K562 (cell line): ENCODE measurements at regions of chr16 and their contacts with region 1.

Region 1: GRCh38 chr16:68528686-68529379 is 10.3 kb upstream of the ZFP90 start:
- DNase-seq: peak; percentile 81 to 87 (median 81)
- ATAC-seq: peak; percentile 96
- H3K4me3 ChIP-seq: no peak overlapping the region
- H3K27ac ChIP-seq: no peak overlapping the region
- H3K4me1 ChIP-seq: peaks cover 0 to 17% of the 10 kb centered on the region in 2 experiments; a peak in 2 of 5 replicates
- H3K27me3 ChIP-seq: peaks cover 0 to 4% of the 10 kb centered on the region in 2 experiments; a peak in 1 of 5 replicates
- CTCF ChIP-seq: peak; percentile 92 to 99 (median 99)
- EP300 ChIP-seq: no peak
- POLR2A ChIP-seq: no peak
- RAD21 ChIP-seq: peak; percentile 89 to 94

Region 2: GRCh38 chr16:68575082-68575481 is 46.2 kb after region 1 on chr16:
- CTCF ChIA-PET with region 1: no interaction called
- POLR2A ChIA-PET with region 1: no interaction called
- in situ Hi-C with region 1: no loop called
- intact Hi-C with region 1: no loop called
- DNase-seq: no peak
- ATAC-seq: no peak
- H3K4me3 ChIP-seq: no peak overlapping the region
- H3K27ac ChIP-seq: no peak overlapping the region
- H3K4me1 ChIP-seq: no peaks in the 10 kb centered on the region
- H3K27me3 ChIP-seq: no peaks in the 10 kb centered on the region
- CTCF ChIP-seq: no peak
- EP300 ChIP-seq: no peak
- POLR2A ChIP-seq: no peak
- RAD21 ChIP-seq: no peak

Region 3: GRCh38 chr16:68689925-68690324 is 161.1 kb after region 1 on chr16:
- CTCF ChIA-PET with region 1: no interaction called
- POLR2A ChIA-PET with region 1: no interaction called
- in situ Hi-C with region 1: no loop called
- intact Hi-C with region 1: loop called (anchors 5 kb)
- DNase-seq: no peak
- ATAC-seq: no peak
- H3K4me3 ChIP-seq: no peak overlapping the region
- H3K27ac ChIP-seq: no peak overlapping the region
- H3K4me1 ChIP-seq: peaks cover 0 to 4% of the 10 kb centered on the region in 2 experiments; a peak in 2 of 5 replicates
- H3K27me3 ChIP-seq: peaks cover 20 to 45% of the 10 kb centered on the region in 2 experiments; a peak in 4 of 5 replicates
- CTCF ChIP-seq: no peak
- EP300 ChIP-seq: no peak
- POLR2A ChIP-seq: no peak
- RAD21 ChIP-seq: no peak

Region 4: DNA sequence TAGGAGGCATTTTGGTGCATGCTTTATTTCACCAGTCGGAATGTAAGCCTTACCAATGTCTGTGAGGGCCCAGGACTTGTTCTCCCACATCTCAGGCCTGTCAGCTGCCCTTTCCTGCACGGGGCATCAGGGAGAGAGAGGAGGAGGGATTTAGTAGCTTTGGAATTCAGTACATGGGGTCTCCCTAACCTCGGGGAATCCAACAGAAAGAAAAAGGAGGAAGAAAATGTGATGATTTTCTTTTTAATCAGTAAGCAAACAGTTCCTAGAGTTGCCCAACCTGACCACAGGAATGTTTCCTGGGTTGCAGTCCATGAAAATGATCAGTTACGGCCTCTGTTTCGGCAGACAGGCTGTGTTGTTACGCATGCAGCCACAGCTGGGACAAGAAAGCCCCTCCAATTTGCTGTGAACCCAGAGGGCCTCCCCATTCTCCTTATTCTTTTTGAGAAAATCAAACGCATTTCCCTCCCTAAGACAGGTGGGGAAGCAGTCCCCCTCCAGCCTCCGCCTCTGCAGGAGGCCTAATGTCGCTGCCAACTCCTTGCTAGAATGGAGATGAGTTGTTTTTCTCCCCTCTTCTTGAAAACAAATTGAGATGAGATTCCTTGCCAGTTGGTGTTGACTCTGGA is 261.4 kb after region 1 on chr16:
- CTCF ChIA-PET with region 1: no interaction called
- POLR2A ChIA-PET with region 1: no interaction called
- in situ Hi-C with region 1: loop called (anchors 10 kb)
- intact Hi-C with region 1: no loop called
- DNase-seq: no peak
- ATAC-seq: no peak
- H3K4me3 ChIP-seq: no peak overlapping the region
- H3K27ac ChIP-seq: no peak overlapping the region
- H3K4me1 ChIP-seq: peaks cover 0 to 9% of the 10 kb centered on the region in 2 experiments; a peak in 4 of 5 replicates
- H3K27me3 ChIP-seq: no peaks in the 10 kb centered on the region
- CTCF ChIP-seq: no peak
- EP300 ChIP-seq: no peak
- POLR2A ChIP-seq: no peak
- RAD21 ChIP-seq: no peak

Region 5: DNA sequence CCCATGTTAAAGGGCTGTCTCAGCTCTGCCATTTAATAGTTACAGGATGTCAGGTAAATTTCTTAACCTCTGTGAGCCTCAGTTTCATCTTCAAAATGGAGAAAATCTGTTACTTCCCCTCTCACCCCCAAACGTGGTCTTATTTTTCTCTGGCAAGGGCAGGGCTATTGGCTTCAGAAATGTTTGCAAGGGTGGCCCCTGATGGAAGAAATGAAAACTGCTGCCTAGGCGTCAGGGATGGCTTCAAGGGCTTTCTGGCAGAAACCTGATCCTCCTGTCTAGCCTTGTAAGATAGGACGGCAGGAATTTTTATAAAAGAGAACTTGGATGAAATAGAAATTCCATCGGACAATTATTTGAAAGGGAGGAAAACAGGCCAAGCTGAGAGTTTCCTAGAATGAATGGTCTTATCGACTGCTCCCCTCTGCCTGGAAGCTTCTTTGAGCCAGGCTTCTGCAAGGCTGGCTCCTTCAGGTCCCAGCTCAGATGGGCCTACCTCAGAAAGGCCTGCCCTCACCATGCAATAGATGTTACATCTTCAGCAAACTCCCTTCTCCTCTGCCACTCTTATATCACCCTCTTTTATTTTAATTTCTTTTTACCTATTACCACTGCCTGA is 271.5 kb after region 1 on chr16:
- CTCF ChIA-PET with region 1: interaction called, 11 read pairs
- POLR2A ChIA-PET with region 1: no interaction called
- in situ Hi-C with region 1: loop called (anchors 10 kb)
- intact Hi-C with region 1: no loop called
- DNase-seq: peak; percentile 62 to 80 (median 66)
- ATAC-seq: peak; percentile 98
- H3K4me3 ChIP-seq: no peak overlapping the region
- H3K27ac ChIP-seq: no peak overlapping the region
- H3K4me1 ChIP-seq: no peaks in the 10 kb centered on the region; a peak in 1 of 5 replicates
- H3K27me3 ChIP-seq: peaks cover 0 to 11% of the 10 kb centered on the region in 2 experiments; a peak in 2 of 5 replicates
- CTCF ChIP-seq: peak; percentile 77 to 94 (median 83)
- EP300 ChIP-seq: no peak
- POLR2A ChIP-seq: no peak
- RAD21 ChIP-seq: peak; percentile 89 to 95

Region 6: GRCh38 chr16:68902008-68902968 is 373.5 kb after region 1 on chr16:
- CTCF ChIA-PET with region 1: no interaction called
- POLR2A ChIA-PET with region 1: no interaction called
- in situ Hi-C with region 1: no loop called
- intact Hi-C with region 1: loop called (anchors 10 kb)
- DNase-seq: peak; percentile 43 to 56 (median 50)
- ATAC-seq: peak; percentile 82
- H3K4me3 ChIP-seq: no peak overlapping the region
- H3K27ac ChIP-seq: no peak overlapping the region
- H3K4me1 ChIP-seq: no peaks in the 10 kb centered on the region
- H3K27me3 ChIP-seq: no peaks in the 10 kb centered on the region
- CTCF ChIP-seq: peak; percentile 67 to 83 (median 70)
- EP300 ChIP-seq: no peak
- POLR2A ChIP-seq: no peak
- RAD21 ChIP-seq: peak; percentile 66 to 87

Region 7: DNA sequence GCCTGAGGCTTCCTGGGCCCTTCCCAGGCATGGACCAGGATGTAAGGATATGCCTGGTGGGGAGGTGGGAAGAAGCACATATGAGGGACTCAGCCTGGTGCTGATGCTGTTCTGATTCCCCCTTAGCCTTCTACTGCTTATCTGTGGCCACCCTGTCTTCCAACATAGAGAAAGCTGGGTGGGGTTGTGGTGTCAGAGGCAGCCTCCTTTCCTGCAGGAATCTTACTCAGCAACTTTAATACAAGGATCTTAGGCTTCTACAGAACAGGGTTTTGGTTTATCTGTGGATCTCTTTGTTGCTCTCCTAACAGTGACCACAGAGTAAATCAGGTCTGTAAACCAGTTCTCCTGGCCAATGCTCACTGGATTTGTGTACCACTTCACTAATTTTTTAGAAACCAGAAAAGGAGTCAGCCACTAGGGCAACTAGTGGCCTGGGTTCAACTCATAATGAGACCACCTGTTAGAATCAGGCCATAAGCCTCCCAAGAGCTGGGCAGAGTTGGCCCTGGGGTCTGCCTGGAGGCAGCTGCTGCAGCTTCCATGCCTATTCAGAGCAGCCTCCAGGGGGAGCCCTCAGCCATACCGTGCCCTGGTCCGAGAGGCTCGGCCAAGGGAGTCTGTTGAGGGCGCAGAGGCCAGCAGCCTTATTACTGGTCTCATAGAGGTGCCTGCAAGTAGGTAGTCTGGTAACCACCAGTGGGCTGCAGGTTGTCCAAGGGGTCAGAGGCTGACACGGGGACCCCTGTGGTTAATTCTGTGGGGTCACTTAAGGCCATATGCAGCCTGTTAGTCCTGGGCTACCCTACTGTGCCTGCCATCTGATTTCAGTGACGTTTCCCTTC is 583.7 kb after region 1 on chr16:
- CTCF ChIA-PET with region 1: no interaction called
- POLR2A ChIA-PET with region 1: no interaction called
- in situ Hi-C with region 1: loop called (anchors 10 kb)
- intact Hi-C with region 1: loop called (anchors 10 kb)
- DNase-seq: peak; percentile 78 to 81 (median 80)
- ATAC-seq: peak; percentile 98
- H3K4me3 ChIP-seq: no peak overlapping the region
- H3K27ac ChIP-seq: no peak overlapping the region
- H3K4me1 ChIP-seq: peaks cover 7 to 20% of the 10 kb centered on the region in 2 experiments; a peak in 4 of 5 replicates
- H3K27me3 ChIP-seq: no peaks in the 10 kb centered on the region
- CTCF ChIP-seq: peak; percentile 81 to 90 (median 88)
- EP300 ChIP-seq: no peak
- POLR2A ChIP-seq: no peak
- RAD21 ChIP-seq: peak; percentile 35 to 64

Region 8: DNA sequence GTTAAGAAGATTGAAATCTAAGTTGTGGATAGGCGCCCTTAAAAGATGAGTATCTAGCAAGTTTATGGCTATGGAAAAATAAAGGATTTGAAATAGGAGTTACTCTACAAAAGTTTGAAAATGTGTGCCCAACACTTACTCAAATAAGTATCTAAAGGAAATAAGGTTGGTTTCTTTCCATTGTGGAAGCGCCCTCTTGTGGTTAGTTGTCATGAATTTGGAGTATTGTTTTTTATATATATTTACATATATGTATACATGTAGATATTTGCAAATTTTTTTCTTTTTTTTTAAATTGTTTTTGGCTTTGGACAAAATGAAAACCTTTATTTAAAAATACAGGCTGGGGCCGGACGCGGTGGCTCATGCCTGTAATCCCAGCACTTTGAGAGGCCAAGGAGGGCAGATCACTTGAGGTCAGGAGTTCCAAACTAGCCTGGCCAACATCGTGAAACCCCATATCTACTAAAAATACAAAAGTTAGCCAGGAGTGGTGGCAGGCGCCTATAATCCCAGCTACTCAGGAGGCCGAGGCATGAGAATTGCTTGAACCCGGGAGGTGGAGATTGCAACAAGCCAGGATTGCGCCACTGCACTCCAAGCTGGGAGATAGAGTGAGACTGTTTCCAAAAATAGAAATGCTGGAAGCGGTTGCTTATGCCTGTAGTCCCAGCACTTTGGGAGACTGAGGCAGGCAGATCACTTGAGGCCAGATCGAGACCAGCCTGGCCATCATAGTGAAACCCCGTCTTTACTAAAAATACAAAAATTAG is 758.3 kb after region 1 on chr16:
- CTCF ChIA-PET with region 1: no interaction called
- POLR2A ChIA-PET with region 1: no interaction called
- in situ Hi-C with region 1: no loop called
- intact Hi-C with region 1: loop called (anchors 10 kb)
- DNase-seq: peak; percentile 30 to 70 (median 33)
- ATAC-seq: peak; percentile 68
- H3K4me3 ChIP-seq: no peak overlapping the region
- H3K27ac ChIP-seq: no peak overlapping the region
- H3K4me1 ChIP-seq: peaks cover 2 to 4% of the 10 kb centered on the region in 2 experiments; a peak in 1 of 5 replicates
- H3K27me3 ChIP-seq: no peaks in the 10 kb centered on the region
- CTCF ChIP-seq: peak in 2 of 3 experiments; percentile 41 to 80; a peak in 4 of 6 replicates
- EP300 ChIP-seq: no peak
- POLR2A ChIP-seq: no peak
- RAD21 ChIP-seq: peak; percentile 70